Activated CD8-positive, alpha-beta T cell treated with anti-CD3 and anti-CD28 coated beads, Interleukin-2, amount 10 ng/mL, durations not matched to agents 7 days and 5 days (primary cell): ENCODE measurements at regions of chr3 and their contacts with region 1.

Region 1: DNA sequence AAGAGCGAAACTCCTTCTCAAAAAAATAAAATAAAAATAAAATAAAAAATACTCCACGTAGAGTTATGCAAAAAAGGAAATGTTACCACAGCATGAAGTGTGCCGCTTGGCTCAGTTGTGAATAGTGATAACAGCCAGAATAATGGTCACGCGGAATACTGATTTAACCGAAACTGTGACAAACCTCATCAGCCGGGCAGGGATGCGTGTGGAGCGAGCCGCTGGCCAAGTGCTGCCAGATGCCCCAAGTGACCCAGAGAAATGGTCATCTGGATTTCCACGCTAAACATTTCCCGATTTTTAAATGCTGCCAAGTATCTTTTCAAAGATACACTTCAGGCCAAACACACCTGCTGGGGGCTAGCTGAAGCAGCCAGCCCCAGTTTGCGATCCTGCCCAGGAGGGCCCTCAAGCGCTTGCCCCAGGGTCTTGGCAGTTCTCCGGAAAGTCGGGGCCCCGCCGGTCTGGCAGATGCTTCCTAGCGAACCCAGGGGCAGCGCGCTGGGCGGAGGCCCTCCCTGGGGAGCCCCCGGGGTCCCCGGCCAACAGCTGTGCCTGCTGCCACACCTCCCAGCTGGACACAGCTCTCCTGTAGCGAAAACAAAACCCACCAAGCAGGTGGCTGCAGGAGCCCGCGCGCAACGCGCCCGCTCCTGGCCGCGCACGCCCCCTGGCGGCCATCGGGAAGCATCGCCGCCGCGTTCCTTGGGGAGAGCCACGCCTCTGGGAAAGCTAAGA is 35.1 kb downstream of the CMTM6 start:
- DNase-seq: peak; percentile 76
- ATAC-seq: peak; percentile 90
- H3K4me3 Mint-ChIP-seq: peak overlapping the region; percentile 17
- H3K27ac Mint-ChIP-seq: no peak overlapping the region
- H3K4me1 Mint-ChIP-seq: peaks cover 34% of the 10 kb centered on the region
- H3K27me3 Mint-ChIP-seq: no peaks in the 10 kb centered on the region

Region 2: GRCh38 chr3:32166654-32167053 is 300.8 kb before region 1 on chr3:
- CTCF ChIA-PET with region 1: no interaction called
- POLR2A ChIA-PET with region 1: no interaction called
- DNase-seq: no peak
- ATAC-seq: no peak
- H3K4me3 Mint-ChIP-seq: no peak overlapping the region
- H3K27ac Mint-ChIP-seq: no peak overlapping the region
- H3K4me1 Mint-ChIP-seq: no peaks in the 10 kb centered on the region
- H3K27me3 Mint-ChIP-seq: no peaks in the 10 kb centered on the region

Region 3: DNA sequence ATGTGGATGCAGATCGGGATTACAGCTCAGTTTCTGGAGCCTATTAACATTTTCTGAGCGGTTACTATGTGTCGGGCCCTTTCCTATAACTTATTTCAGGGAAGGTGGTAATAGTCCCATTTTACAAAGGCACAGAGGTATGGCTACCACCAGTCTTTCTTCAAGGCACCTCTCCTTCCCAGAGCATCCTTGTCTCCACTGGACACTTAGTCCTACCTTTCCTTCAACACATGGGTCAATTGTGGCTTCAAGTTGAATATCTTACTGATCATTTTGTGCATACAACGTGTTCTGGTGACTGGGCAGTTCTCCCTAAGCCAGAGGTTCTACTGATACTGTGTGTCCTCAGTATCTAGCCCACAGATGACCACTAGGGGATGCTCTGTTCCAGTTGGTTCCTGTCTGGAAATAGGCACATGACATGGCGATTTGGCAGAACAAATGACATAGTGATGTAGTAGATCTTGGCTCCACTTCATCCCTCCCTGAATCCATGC is 289.8 kb before region 1 on chr3:
- CTCF ChIA-PET with region 1: interaction called, 12 read pairs
- POLR2A ChIA-PET with region 1: no interaction called
- DNase-seq: peak; percentile 63
- ATAC-seq: peak; percentile 80
- H3K4me3 Mint-ChIP-seq: no peak overlapping the region
- H3K27ac Mint-ChIP-seq: no peak overlapping the region
- H3K4me1 Mint-ChIP-seq: peaks cover 6% of the 10 kb centered on the region
- H3K27me3 Mint-ChIP-seq: peaks cover 14% of the 10 kb centered on the region

Region 4: DNA sequence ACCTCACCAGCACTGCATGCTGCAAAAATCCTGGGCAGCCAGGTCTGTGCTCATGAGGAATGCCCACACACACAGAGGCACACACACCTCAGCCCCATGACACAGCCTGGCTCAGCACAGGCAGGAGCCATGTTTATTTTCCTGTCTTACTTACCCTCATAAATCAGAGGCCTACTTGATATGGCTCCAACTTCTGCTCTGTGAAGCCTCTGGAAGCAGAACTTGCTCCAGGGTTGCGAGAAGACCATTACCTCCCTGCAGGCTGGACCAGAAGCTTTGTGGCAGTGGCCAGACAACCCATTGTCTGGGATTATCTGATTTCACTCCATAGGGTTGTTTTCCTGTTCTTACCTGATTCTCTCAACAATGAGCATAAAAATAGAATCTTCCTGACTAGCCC is 272.8 kb before region 1 on chr3:
- CTCF ChIA-PET with region 1: no interaction called
- POLR2A ChIA-PET with region 1: no interaction called
- DNase-seq: no peak
- ATAC-seq: no peak
- H3K4me3 Mint-ChIP-seq: no peak overlapping the region
- H3K27ac Mint-ChIP-seq: no peak overlapping the region
- H3K4me1 Mint-ChIP-seq: no peaks in the 10 kb centered on the region
- H3K27me3 Mint-ChIP-seq: peaks cover 19% of the 10 kb centered on the region

Region 5: GRCh38 chr3:32374788-32375595 is 92.5 kb before region 1 on chr3:
- CTCF ChIA-PET with region 1: interaction called, 107 read pairs
- POLR2A ChIA-PET with region 1: interaction called, 8 read pairs
- DNase-seq: peak; percentile 86
- ATAC-seq: peak; percentile 70
- H3K4me3 Mint-ChIP-seq: no peak overlapping the region
- H3K27ac Mint-ChIP-seq: no peak overlapping the region
- H3K4me1 Mint-ChIP-seq: peaks cover 24% of the 10 kb centered on the region
- H3K27me3 Mint-ChIP-seq: peaks cover 10% of the 10 kb centered on the region

Region 6: DNA sequence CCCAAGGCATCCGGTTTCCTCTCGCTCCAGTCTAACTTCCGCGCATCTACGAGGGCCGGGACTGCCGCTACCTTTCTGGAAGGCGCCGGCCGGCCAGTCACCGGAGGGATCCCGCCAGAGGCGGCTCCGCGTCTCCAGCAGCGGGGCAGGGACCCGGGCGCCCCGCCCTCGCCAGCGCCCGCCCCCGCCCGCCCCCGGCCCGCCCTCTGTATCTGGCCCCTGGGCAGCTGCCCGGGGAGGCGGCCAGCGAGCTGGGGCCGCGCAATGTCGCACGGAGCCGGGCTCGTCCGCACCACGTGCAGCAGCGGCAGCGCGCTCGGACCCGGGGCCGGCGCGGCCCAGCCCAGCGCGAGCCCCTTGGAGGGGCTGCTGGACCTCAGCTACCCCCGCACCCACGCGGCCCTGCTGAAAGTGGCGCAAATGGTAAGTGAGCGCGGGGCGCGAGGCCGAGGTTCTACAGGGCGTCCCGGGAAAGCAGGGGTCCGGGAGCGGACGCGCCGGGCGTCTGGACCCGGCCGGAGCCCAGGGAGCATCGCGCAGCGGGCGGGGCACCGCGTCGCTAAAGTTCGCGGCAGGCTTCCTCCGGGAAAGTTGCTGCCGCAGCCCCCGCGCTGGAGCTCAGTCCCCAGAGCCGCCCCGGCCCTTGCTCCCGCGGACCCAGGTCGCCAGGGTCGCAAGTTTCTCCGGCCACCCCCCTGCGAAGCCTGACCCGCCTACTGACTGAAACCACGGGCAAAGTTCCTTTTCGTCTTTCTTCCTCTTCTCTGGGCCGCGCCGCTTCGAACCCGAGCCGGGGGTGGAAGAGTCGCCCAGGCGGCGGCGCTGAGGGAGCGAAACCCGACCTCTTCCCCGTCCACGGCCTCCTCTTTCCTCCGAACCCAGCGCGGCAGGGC is 75.6 kb before region 1 on chr3 and contains the start of gene CMTM7:
- CTCF ChIA-PET with region 1: interaction called, 39 read pairs
- POLR2A ChIA-PET with region 1: interaction called, 3 read pairs
- DNase-seq: peak; percentile 75
- ATAC-seq: peak; percentile 84
- H3K4me3 Mint-ChIP-seq: peak within 1 kb of the TSS; percentile 98
- H3K27ac Mint-ChIP-seq: peak within 1 kb of the TSS; percentile 92
- H3K4me1 Mint-ChIP-seq: peaks cover 56% of the 10 kb centered on the region
- H3K27me3 Mint-ChIP-seq: no peaks in the 10 kb centered on the region
- total RNA-seq, gene CMTM7: 38.3 to 42.3 TPM

Region 7: GRCh38 chr3:32414520-32415202 is 52.8 kb before region 1 on chr3:
- CTCF ChIA-PET with region 1: interaction called, 32 read pairs
- POLR2A ChIA-PET with region 1: interaction called, 3 read pairs
- DNase-seq: peak; percentile 73
- ATAC-seq: peak; percentile 91
- H3K4me3 Mint-ChIP-seq: peak overlapping the region; percentile 40
- H3K27ac Mint-ChIP-seq: peak overlapping the region; percentile 83
- H3K4me1 Mint-ChIP-seq: peaks cover 66% of the 10 kb centered on the region
- H3K27me3 Mint-ChIP-seq: no peaks in the 10 kb centered on the region

Region 8: GRCh38 chr3:32428092-32429068 is 39.1 kb before region 1 on chr3:
- CTCF ChIA-PET with region 1: interaction called, 83 read pairs
- POLR2A ChIA-PET with region 1: interaction called, 3 read pairs
- DNase-seq: peak; percentile 69
- ATAC-seq: peak; percentile 64
- H3K4me3 Mint-ChIP-seq: peak overlapping the region; percentile 69
- H3K27ac Mint-ChIP-seq: peak overlapping the region; percentile 91
- H3K4me1 Mint-ChIP-seq: peaks cover 95% of the 10 kb centered on the region
- H3K27me3 Mint-ChIP-seq: no peaks in the 10 kb centered on the region

Region 9: GRCh38 chr3:32453346-32453745 is 14.2 kb before region 1 on chr3:
- CTCF ChIA-PET with region 1: interaction called, 25 read pairs
- POLR2A ChIA-PET with region 1: no interaction called
- DNase-seq: no peak
- ATAC-seq: no peak
- H3K4me3 Mint-ChIP-seq: no peak overlapping the region
- H3K27ac Mint-ChIP-seq: no peak overlapping the region
- H3K4me1 Mint-ChIP-seq: peaks cover 54% of the 10 kb centered on the region
- H3K27me3 Mint-ChIP-seq: no peaks in the 10 kb centered on the region